Tibial artery (tissue), 4 donors: ENCODE measurements at regions of chr16 and their contacts with region 1.

Region 1: GRCh38 chr16:66608241-66609138 is 4.0 kb downstream of the CMTM3 start:
- DNase-seq: peak; percentile 82 to 90
- H3K4me3 ChIP-seq: no peak overlapping the region
- H3K27ac ChIP-seq: no peak overlapping the region
- H3K4me1 ChIP-seq: peaks cover 0 to 41% (median 28%) of the 10 kb centered on the region in 4 donors
- H3K27me3 ChIP-seq: peaks cover 0 to 14% of the 10 kb centered on the region in 2 donors
- CTCF ChIP-seq: peak; percentile 85 to 92

Region 2: DNA sequence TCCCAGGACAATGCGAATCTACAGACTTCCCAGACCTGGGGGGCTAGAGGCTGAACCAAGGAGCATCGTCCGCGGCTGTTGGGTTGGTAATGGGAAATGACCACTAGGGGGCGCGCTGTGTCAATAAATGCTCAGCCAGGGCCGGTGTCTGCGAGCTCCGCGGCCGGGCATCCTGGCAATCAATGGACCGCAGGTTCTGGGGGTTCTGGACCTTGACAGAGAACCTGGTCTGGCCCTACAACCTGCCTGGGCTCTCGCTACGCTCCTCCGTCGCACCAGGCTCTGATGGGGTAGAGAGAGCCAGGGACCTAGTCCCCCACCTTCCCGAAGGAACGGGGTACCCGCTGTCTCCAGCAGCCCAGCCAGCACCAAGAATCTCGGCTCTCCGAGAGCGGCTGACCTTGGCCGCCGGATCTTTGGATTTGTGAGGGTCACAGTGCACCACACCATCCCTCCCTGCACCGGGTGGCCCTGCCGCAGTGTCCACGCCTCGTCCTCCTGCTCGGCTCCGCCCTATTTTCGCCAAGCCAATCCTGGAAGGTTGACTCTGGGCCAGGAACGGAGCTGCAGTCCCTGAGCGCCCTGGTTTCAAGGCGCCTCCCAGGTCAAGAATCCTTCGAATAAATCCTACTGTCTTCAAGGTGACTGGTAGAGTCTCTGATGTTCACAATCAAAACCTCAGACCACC is 201.8 kb before region 1 on chr16:
- intact Hi-C with region 1: loop called (anchors 5 kb)
- DNase-seq: peak; percentile 87 to 90
- H3K4me3 ChIP-seq: peak overlapping the region; percentile 40 to 48
- H3K27ac ChIP-seq: no peak overlapping the region
- H3K4me1 ChIP-seq: peaks cover 0 to 14% (median 6%) of the 10 kb centered on the region in 4 donors
- H3K27me3 ChIP-seq: peaks cover 0 to 24% of the 10 kb centered on the region in 2 donors
- CTCF ChIP-seq: peak; percentile 81 to 92

Region 3: DNA sequence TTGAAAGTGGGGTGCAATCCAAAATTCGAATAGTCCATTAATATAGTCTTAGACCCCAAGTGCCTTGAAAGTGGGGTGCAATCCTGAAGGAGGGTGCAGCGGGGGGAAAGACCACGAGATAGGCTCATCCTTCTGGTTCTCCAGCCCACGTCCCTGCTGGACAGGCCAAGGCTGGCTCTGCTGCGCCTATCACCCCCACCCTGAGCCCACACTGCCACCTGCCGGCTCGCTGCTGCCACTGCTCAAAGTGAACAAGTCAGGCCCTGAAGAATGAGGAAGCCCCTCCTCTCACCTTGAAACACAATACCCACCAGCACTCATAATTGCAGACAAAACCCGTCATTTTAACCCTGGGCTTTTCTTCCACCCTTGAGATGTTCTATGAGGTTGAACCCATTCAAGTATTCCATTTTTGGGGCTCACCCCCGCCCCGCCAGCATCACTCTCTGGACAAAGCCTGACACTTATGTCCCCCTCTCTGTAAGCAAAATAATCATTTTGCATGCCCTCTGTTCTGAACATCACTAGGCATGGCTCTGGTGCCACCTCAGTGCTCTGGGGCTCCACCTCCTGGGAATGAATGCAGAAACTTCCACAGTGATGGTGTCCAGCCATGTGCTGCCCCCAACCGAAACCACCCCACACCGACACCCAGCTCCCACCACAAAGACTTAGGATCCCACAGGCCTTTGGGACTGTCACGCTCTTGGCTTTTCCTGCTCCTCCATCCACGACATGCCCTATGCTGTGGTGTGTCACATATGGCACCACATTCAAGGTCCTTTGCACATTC is 124.6 kb before region 1 on chr16:
- intact Hi-C with region 1: loop called (anchors 10 kb)
- DNase-seq: peak; percentile 76 to 85
- H3K4me3 ChIP-seq: no peak overlapping the region
- H3K27ac ChIP-seq: no peak overlapping the region
- H3K4me1 ChIP-seq: peaks cover 0 to 26% (median 22%) of the 10 kb centered on the region in 4 donors
- H3K27me3 ChIP-seq: no peaks in the 10 kb centered on the region
- CTCF ChIP-seq: peak; percentile 83 to 93

Region 4: DNA sequence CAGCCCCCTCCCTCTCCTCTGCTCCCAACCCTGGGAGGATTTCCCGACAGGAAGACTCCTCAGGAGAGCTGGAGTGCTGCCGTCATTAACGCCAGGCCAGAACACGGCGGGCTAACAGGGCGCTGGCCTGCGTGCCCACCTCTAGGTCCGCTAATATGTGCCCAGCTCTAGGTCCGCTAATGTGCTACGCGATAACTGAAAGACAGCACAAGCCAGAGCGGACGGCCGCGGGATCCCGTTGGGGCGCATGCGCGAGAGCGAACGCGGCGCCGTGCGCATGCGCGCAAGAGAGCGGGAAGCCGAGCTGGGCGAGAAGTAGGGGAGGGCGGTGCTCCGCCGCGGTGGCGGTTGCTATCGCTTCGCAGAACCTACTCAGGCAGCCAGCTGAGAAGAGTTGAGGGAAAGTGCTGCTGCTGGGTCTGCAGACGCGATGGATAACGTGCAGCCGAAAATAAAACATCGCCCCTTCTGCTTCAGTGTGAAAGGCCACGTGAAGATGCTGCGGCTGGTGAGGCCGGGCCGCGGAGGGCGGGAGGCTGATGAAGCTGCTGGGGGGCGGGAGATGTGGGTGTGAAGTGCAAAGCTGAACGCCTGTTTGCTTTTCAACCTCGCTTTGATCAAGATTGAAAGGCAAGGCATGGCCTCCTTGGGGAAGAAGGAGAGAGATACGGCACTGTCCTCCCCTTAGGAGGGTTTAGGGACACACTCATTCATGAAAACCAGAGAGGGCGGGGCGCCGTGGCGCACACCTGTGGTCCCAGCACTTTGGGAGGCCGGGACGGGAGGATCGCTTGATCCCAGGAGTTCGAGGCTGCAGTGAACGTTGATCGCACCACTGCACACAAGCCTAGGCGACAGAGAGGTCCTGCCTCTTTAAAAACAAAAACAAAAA is 56.0 kb before region 1 on chr16 and contains the start of gene CKLF:
- intact Hi-C with region 1: no loop called
- DNase-seq: peak; percentile 83 to 94
- H3K4me3 ChIP-seq: peak within 1 kb of the TSS; percentile 60 to 66
- H3K27ac ChIP-seq: peak within 1 kb of the TSS; percentile 93 to 96
- H3K4me1 ChIP-seq: peaks cover 0 to 70% (median 46%) of the 10 kb centered on the region in 4 donors
- H3K27me3 ChIP-seq: no peaks in the 10 kb centered on the region
- CTCF ChIP-seq: no peak

Region 5: DNA sequence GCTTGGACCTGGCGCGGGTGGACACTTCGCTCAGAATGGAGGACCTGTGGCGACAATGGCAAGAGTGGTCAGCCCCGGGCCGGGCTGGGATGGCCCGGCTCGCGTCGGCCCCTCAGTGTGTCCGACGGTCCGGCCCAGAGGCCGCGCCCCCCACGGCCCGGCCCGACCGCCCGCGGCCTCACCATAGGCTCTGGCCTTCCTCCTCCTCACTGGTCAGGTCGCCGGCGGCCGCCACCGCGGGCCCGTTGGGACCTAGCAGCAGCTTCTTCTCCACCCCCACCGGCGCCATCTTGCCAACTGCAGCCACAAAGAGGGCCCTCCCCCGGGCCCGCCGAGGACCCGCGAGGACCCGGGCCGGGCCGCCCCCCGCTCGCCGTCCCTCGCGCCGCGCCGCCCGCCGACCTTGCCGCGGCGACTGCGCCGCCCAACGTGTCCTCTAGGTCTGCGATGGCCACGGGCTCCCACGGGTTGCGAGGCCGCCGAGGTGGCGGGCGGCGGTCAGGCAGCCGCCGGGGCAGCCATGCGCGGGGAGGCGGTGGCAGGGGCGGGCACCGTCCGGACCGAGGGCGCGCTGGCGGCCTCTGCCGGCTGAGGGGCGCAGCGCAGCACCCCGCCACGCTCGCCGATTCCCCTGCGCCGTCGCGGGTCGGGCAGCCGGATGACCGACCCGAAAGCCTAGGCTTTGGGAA is 143.0 kb after region 1 on chr16 and contains the start of gene DYNC1LI2:
- intact Hi-C with region 1: loop called (anchors 5 kb)
- DNase-seq: peak; percentile 78 to 89
- H3K4me3 ChIP-seq: peak within 1 kb of the TSS; percentile 84 to 95
- H3K27ac ChIP-seq: peak within 1 kb of the TSS; percentile 85 to 96
- H3K4me1 ChIP-seq: peaks cover 0 to 40% (median 23%) of the 10 kb centered on the region in 4 donors
- H3K27me3 ChIP-seq: no peaks in the 10 kb centered on the region
- CTCF ChIP-seq: peak; percentile 83 to 96

Region 6: DNA sequence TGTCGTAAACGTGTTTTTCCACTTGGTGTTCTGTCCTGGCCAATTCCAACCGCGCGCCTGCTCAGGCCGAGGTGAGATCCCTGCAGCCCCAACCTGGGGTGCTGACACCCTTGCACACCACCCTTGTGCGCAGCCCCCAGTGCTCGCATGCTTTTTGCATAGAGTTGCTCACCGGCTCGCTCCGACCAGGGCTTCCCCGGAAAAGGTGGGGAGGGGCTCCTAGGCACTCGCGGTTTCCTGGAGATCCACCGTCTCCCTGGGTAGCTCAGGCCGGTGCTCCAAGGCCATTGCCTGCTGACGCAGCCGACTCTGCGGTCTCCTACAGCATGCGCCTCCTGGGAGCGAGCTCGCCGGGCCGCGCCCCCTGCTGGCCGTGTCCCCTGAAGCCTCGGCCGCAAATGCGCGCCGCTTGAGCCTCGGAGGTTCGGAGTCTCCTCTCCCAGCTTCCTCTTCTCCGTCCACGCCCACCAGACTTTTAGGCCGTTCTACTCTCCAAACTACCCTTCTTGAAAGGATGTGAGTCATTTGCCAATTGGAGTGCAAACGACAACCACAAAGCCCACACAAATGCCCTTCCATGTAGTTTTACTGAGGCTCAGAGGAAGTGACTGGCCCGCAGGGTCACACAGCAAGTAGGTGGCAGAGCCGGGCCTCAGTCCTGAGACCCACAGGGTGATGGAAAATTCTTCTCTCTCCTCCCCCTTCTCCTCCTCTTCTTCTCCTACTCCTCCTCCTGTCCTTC is 264.6 kb after region 1 on chr16:
- intact Hi-C with region 1: loop called (anchors 5 kb)
- DNase-seq: peak; percentile 88 to 95
- H3K4me3 ChIP-seq: peak overlapping the region; percentile 37 to 45
- H3K27ac ChIP-seq: peak overlapping the region; percentile 68 to 75
- H3K4me1 ChIP-seq: peaks cover 0 to 23% (median 13%) of the 10 kb centered on the region in 4 donors
- H3K27me3 ChIP-seq: no peaks in the 10 kb centered on the region
- CTCF ChIP-seq: peak; percentile 92 to 93